ENCODE measurements at regions of chr6 and their contacts with region 1.

Region 1: DNA sequence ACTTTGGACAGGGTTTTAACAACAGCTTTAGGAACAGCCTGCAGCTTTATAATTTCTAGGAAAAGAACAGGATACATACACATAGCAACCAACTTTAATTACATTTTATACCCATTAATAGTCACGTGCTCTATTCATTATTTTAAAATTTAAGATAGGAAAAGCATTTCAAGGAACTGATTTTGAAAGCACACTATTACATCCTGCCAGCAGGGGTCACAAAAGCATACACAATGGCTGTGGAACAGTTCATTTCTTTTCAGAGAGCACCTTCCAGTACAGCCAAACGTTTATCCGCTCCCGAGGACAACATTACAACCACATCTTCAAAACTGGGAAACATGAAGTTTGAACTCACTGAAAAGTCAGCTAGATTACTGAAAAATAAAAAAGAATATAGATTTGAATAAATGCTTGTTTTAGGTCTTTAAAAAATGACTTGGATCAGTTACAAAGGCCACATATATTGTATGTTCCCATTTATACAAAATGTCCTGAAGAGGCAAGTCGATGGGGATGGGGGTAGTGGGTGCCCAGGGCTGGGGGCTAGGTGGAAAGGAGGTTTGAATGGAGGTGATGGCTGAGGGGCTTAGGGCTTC is 104.6 kb upstream of the EXOC2 start:
- DNase-seq: peak; percentile 29
- ATAC-seq: peak in 1 of 2 donors; percentile 37

Region 2: DNA sequence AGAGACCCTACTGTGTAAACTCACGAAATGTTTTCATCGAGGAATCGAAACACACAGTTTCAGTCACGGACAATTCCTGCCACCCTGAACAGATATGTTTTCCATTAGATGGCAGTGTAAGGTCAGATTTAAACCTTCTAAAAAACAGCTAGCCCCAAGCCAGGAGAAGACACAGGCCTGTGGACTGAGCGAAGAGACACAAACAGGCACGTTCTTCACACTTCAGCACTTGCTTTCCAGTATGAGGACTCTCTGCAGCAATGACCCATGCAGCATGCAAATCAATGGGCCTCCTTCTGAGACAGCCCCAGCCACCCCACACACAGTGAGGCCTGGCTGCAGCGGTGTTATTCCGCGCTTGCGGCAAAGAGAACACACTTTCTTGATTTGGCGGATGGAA is 172.6 kb before region 1 on chr6:
- intact Hi-C with region 1: loop called in 1 of 2 experiments (anchors 10 kb)
- DNase-seq: no peak
- ATAC-seq: peak; percentile 44 to 82

Region 3: GRCh38 chr6:1381481-1382330 is 584.1 kb after region 1 on chr6:
- intact Hi-C with region 1: loop called (anchors 2 to 5 kb)
- DNase-seq: peak; percentile 50
- ATAC-seq: peak; percentile 83 to 84

Region 4: DNA sequence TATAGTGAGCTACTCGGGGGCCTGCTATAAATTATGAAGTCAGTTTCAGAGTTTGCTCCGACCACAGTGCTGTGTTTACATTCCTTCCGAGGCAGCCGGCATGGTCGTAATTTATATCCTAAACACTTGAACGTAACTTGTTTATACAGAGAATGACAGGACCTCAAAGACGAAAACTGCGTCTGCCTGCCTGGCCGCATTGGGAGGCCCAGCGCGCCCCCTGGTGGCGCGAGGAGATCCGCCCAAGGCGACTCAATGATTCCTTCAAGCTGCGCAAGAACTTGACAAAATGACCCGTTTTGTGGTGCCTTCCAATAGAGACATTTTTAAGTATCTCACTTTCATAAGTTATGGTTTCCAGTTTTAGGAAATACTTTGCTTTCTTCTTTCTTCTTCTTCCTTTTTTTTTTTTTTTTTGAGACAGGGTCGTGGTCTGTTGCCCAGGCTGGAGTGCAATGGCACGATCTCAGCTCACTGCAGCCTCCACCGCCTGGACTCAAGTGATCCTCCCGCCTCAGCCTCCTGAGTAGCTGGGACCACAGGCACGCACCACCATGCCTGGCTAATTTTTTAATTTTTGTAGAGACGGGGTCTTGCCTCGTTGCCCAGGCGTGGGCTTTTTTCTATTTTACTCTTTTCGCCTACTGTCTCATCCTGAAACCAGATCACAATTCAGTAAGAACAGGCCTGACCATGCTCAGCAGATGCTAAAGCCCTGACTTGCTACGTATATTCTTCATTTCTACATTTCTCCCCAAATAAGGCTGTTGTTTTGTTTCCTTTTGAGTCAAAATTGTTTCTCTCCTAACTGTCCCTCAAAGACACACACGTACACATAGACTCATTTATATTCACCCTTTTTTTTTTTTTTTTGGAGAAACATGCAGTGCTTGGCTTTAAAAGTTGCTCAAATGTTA is 599.6 kb after region 1 on chr6:
- intact Hi-C with region 1: loop called (anchors 5 kb)
- DNase-seq: peak; percentile 69
- ATAC-seq: peak; percentile 65 to 67

Measured in left cardiac atrium (tissue), 4 donors.